Heart left ventricle (tissue), 16 donors: ENCODE measurements at regions of chr20 and their contacts with region 1.

Region 1: DNA sequence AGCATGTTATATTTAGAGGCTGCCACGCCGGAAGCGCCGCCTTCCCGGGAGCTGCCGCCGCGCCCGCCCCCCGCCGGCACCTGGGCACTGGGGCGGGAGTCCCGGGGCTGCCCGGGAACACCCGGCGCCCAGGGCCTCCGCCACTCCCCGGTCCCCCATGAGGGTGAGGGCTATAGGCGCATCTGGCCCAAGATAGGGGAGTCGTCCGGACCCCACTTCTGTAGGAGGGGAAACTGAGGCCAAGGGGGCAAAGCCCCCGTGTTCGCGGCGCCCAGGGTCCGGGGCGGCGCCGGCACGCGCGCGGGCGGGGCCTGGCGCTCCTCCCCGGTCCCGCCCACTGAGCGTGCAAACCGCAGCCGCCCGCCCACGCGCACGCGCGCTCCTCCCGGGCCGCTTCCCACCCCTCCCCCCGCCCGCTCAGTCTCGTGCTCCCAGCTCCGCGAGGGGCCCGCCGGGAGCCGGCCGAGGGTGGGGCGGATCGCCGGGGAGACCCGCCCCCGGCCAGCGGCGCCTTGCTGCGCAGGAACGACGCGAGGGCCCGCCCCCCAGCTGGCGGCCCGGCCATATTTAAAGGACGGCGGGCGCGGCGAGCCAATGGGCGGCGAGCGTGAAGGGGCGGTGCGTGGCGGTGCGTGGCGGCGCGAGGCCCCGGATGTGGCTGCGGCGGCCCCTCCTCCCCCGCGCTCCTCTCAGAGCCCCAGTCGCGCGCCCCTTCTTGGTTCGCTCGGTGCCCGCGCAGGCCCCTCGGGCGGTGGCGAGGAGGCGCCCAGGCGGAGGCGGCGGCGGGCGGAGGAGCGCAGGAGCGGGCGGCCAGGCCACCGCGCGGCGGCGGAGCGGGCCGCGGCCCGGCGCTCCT is at the start of gene LSM14B:
- DNase-seq: peak; percentile 97 to 98 (median 97)
- ATAC-seq: peak; percentile 83 to 92 (median 88)
- H3K4me3 ChIP-seq: peak within 1 kb of the TSS; percentile 63 to 96 (median 82)
- H3K27ac ChIP-seq: peak within 1 kb of the TSS; percentile 89 to 99 (median 98)
- H3K4me1 ChIP-seq: peaks cover 3 to 59% (median 37%) of the 10 kb centered on the region in 12 donors
- H3K27me3 ChIP-seq: peaks cover 0 to 8% (median 0%) of the 10 kb centered on the region in 9 donors
- CTCF ChIP-seq: no peak
- POLR2A ChIP-seq: peak in 1 of 2 donors; percentile 28
- total RNA-seq, gene LSM14B: 38.6 to 64.7 (median 54.6) TPM

Region 2: GRCh38 chr20:62065669-62066338 is 56.2 kb before region 1 on chr20 and contains the start of gene TAF4:
- intact Hi-C with region 1: loop called (anchors 1 to 5 kb)
- DNase-seq: peak; percentile 73 to 89 (median 81)
- ATAC-seq: peak; percentile 54 to 65 (median 58)
- H3K4me3 ChIP-seq: peak within 1 kb of the TSS; percentile 60 to 87 (median 70)
- H3K27ac ChIP-seq: peak within 1 kb of the TSS; percentile 74 to 94 (median 89)
- H3K4me1 ChIP-seq: peaks cover 2 to 41% (median 30%) of the 10 kb centered on the region in 12 donors
- H3K27me3 ChIP-seq: no peaks in the 10 kb centered on the region
- CTCF ChIP-seq: no peak
- POLR2A ChIP-seq: peak in 1 of 2 donors; percentile 85
- total RNA-seq, gene TAF4: 7.8 to 37.7 (median 11.4) TPM

Region 3: DNA sequence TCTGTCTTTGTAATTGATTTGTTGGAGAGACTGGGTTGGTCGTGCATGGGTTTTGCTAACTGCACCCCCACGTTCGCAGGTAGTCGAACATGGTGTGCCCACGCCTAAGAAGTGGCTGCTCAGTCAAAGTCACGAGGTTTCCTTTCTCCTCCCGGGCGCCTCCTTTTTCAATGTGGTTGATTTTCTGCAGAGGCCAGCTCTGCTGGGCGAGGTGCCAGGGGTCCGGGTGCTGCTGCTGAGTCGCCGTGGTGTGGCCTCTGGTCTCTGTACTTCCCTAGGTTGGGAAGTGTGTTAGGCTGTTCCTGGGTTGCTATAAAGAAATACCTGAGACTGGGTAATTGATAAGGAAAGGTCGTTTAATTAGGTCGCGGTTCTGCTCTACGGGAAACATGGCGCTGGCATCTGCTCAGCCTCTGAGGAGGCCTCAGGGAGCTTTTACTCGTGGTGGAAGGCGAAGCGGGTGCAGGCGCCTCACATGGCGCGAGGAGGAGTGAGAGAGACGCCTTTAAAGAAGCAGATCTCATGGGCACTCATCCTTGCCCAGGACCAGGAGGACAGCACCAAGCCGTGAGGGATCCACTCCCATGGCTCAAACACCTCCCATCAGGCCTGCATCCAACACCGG is 130.4 kb after region 1 on chr20:
- intact Hi-C with region 1: no loop called
- DNase-seq: peak in 1 of 5 donors; percentile 49
- ATAC-seq: no peak
- H3K4me3 ChIP-seq: no peak overlapping the region
- H3K27ac ChIP-seq: no peak overlapping the region
- H3K4me1 ChIP-seq: peaks cover 0 to 36% (median 10%) of the 10 kb centered on the region in 12 donors
- H3K27me3 ChIP-seq: no peaks in the 10 kb centered on the region
- CTCF ChIP-seq: no peak
- POLR2A ChIP-seq: no peak